CD8-positive, alpha-beta T cell (primary cell): ENCODE measurements at regions of chr18 and their contacts with region 1.

Region 1: DNA sequence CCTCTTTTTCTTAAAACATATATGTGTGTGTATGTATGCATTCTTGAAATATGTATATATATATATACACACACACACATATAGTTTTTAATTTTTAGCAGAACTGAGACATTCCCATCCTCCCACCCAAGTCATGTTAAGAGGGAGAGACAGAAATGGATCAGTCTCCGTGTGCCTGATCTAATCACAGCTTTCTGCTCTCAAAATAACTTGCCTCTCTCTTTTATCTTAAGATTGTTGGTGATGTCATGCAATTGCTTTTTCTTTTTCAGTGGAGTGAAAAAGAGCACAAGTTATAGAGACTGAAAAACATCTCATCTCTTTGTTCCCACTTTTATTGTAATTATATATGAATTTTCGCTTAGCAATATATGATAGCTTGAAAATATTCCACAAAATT is 279.9 kb upstream of the DOK6 start:
- DNase-seq: no peak
- ATAC-seq: no peak
- H3K4me3 ChIP-seq: no peak overlapping the region
- H3K4me3 Mint-ChIP-seq: no peak overlapping the region
- H3K27ac ChIP-seq: no peak overlapping the region
- H3K27ac Mint-ChIP-seq: no peak overlapping the region
- H3K4me1 ChIP-seq: no peaks in the 10 kb centered on the region
- H3K4me1 Mint-ChIP-seq: no peaks in the 10 kb centered on the region
- H3K27me3 ChIP-seq: no peaks in the 10 kb centered on the region
- H3K27me3 Mint-ChIP-seq: no peaks in the 10 kb centered on the region
- CTCF ChIP-seq: no peak

Region 2: DNA sequence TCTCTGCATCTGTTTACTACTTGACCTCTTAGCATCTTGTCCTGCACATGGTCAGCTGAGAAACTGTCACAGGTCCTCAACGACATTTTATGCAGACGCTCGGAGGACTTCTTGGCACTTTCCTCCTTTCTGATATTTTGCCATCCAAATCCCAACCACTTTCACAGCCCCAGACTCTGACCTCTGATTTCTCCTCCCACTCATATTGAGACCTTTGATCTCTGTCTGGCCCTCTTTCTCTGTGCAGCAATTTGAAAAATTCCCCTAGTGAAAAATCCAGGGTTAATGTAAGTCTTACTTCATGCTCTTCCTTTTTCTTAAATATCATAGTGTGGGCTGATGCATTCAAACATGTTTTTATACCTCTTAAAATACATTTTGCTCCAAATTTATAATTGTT is 49.2 kb before region 1 on chr18:
- CTCF ChIA-PET with region 1: no interaction called
- POLR2A ChIA-PET with region 1: no interaction called
- intact Hi-C with region 1: loop called in 1 of 2 experiments (anchors 1 kb)
- DNase-seq: no peak
- ATAC-seq: no peak
- H3K4me3 ChIP-seq: no peak overlapping the region
- H3K4me3 Mint-ChIP-seq: no peak overlapping the region
- H3K27ac ChIP-seq: no peak overlapping the region
- H3K27ac Mint-ChIP-seq: no peak overlapping the region
- H3K4me1 ChIP-seq: no peaks in the 10 kb centered on the region
- H3K4me1 Mint-ChIP-seq: no peaks in the 10 kb centered on the region
- H3K27me3 ChIP-seq: no peaks in the 10 kb centered on the region
- H3K27me3 Mint-ChIP-seq: no peaks in the 10 kb centered on the region
- CTCF ChIP-seq: no peak